ENCODE measurements at regions of chr12 and their contacts with region 1.

Region 1: GRCh38 chr12:7108796-7109571 is at the start of gene C1RL:
- DNase-seq: peak; percentile 86 to 94 (median 90)
- ATAC-seq: peak; percentile 85 to 88 (median 86)
- H3K4me3 ChIP-seq: peak within 1 kb of the TSS; percentile 31 to 76 (median 60)
- H3K27ac ChIP-seq: peak within 1 kb of the TSS; percentile 75 to 94 (median 91)
- H3K4me1 ChIP-seq: peaks cover 0 to 41% (median 10%) of the 10 kb centered on the region in 12 donors
- H3K27me3 ChIP-seq: no peaks in the 10 kb centered on the region
- CTCF ChIP-seq: peak; percentile 92 to 99 (median 97)
- POLR2A ChIP-seq: peak in 1 of 2 donors; percentile 8
- total RNA-seq, gene C1RL: 5.4 to 27.1 (median 7.9) TPM

Region 2: DNA sequence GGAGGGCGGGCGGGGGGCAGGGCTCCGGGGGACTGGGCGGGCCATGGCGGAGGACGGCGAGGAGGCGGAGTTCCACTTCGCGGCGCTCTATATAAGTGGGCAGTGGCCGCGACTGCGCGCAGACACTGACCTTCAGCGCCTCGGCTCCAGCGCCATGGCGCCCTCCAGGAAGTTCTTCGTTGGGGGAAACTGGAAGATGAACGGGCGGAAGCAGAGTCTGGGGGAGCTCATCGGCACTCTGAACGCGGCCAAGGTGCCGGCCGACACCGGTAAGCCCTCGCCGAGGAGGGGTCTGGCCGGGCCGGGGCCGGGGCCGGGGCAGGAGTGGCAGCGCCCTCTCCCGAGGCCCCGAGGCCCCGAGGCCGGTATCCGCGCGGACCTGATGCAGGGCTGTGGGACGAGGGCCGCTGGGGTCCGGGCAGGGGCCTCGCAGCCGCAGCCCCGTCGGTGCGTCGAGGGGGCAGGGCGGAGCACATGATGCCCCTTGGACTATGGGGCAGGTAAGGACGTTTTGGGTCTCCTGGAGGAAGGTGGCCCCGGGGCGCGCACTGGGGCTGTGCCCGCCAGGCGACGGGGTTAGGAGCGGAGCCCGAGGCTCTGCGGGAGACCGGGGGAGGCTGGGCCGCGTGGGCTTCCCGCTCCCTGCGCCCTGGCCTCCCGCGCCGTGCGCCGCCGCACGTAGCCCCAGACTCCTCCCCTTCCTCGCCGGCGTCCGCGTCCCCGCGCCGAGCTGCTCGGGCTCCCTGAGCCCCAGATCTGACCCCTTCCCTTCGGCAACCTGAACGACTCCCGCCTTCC is 241.4 kb before region 1 on chr12 and contains the start of gene TPI1:
- intact Hi-C with region 1: loop called in 1 of 10 experiments (anchors 5 kb)
- DNase-seq: peak; percentile 89 to 93 (median 90)
- ATAC-seq: peak; percentile 66 to 87 (median 82)
- H3K4me3 ChIP-seq: peak within 1 kb of the TSS; percentile 77 to 100 (median 98)
- H3K27ac ChIP-seq: peak within 1 kb of the TSS; percentile 96 to 100 (median 99)
- H3K4me1 ChIP-seq: peaks cover 15 to 47% (median 43%) of the 10 kb centered on the region in 12 donors
- H3K27me3 ChIP-seq: no peaks in the 10 kb centered on the region
- CTCF ChIP-seq: peak in 2 of 12 donors; percentile 15 to 23
- POLR2A ChIP-seq: peak; percentile 80 to 99
- total RNA-seq, gene TPI1: 600 to 1,024 (median 730) TPM

Region 3: DNA sequence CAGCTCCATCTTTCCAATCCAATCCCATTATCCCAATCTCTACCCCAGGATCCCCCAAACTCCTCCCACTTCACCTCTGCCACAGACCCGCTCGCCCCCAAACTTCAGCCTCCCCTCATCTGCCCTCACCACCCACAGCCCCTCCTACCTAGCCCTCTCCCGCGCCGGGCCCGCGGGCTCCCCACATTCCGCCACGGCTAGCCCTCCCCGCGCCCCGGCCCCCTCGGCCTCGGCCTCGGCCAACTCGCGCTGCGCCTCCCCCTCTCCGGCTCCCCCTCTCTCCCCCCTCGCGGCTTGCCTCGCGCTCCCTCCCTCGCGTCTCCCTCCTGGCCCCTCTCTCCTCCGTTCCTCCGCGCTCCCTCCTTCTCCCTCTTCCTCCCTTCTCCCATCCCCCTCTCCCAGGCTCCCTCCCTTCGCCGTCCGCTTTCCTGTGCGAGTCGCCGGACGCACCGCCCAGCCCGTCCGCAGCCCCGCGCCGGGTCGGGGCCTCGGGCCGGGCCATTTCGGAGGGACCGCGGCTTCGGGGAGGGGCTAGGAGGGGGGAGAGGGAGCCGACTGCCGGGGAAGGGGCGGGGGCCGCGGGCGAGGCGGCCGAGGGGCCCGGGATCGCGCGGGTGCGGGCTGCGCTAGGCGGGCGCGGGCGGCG is 181.5 kb before region 1 on chr12 and contains the start of gene ATN1:
- intact Hi-C with region 1: loop called in 1 of 10 experiments (anchors 5 kb)
- DNase-seq: peak; percentile 89 to 91 (median 90)
- ATAC-seq: peak; percentile 23 to 65 (median 60)
- H3K4me3 ChIP-seq: peak within 1 kb of the TSS; percentile 67 to 98 (median 83)
- H3K27ac ChIP-seq: peak within 1 kb of the TSS; percentile 87 to 98 (median 96)
- H3K4me1 ChIP-seq: peaks cover 12 to 79% (median 58%) of the 10 kb centered on the region in 12 donors
- H3K27me3 ChIP-seq: no peaks in the 10 kb centered on the region
- CTCF ChIP-seq: no peak
- POLR2A ChIP-seq: peak in 1 of 2 donors; percentile 38
- total RNA-seq, gene ATN1: 38.4 to 82.9 (median 67.2) TPM

Region 4: GRCh38 chr12:6944381-6945186 is 164.4 kb before region 1 on chr12:
- intact Hi-C with region 1: loop called in 5 of 10 experiments (anchors 1 to 10 kb)
- DNase-seq: peak; percentile 94 to 96 (median 95)
- ATAC-seq: peak; percentile 70 to 78 (median 72)
- H3K4me3 ChIP-seq: peak overlapping the region; percentile 52 to 86 (median 78)
- H3K27ac ChIP-seq: peak overlapping the region; percentile 91 to 100 (median 98)
- H3K4me1 ChIP-seq: peaks cover 0 to 64% (median 30%) of the 10 kb centered on the region in 12 donors
- H3K27me3 ChIP-seq: no peaks in the 10 kb centered on the region
- CTCF ChIP-seq: peak; percentile 68 to 96 (median 86)
- POLR2A ChIP-seq: peak in 1 of 2 donors; percentile 28

Region 5: GRCh38 chr12:7018350-7019042 is 90.5 kb before region 1 on chr12 and contains the start of gene LPCAT3:
- intact Hi-C with region 1: loop called in 2 of 10 experiments (anchors 5 kb)
- DNase-seq: peak; percentile 97 to 99 (median 98)
- ATAC-seq: peak; percentile 96 to 97 (median 96)
- H3K4me3 ChIP-seq: peak within 1 kb of the TSS; percentile 53 to 96 (median 78)
- H3K27ac ChIP-seq: peak within 1 kb of the TSS; percentile 48 to 96 (median 94)
- H3K4me1 ChIP-seq: peaks cover 0 to 38% (median 19%) of the 10 kb centered on the region in 12 donors
- H3K27me3 ChIP-seq: no peaks in the 10 kb centered on the region
- CTCF ChIP-seq: peak; percentile 84 to 96 (median 91)
- POLR2A ChIP-seq: peak in 1 of 2 donors; percentile 76
- total RNA-seq, gene LPCAT3: 19.9 to 66.3 (median 46.8) TPM

Region 6: DNA sequence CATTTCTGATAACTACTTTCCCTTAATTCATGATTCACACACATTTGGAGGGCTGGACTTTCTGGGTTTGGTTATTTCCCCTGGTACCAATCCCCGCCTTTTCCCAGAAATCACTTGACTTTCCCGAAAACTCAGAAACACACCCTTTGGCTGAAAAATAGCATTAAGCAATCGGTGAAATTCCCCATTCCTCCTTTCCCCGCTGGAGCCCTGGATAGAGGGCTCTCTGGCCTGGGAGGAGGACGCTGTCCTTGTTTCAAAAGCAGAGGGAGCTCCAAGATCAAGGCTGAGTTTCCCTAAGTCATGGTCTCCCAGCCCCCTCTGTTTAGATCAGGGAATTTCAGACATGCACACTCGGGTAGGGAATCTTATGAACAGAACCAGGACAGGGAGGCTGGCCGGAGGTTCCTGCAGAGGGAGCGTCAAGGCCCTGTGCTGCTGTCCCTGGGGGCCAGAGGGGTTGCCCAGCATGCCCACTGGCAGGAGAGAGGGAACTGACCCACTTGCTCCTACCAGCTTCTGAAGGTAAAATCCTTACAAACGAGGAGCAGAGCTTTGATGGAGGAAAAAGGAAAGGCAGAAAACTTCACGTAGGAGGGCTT is 48.5 kb before region 1 on chr12 and contains the start of gene C1S:
- intact Hi-C with region 1: loop called in 9 of 10 experiments (anchors 1 to 5 kb)
- DNase-seq: peak; percentile 69 to 74 (median 71)
- ATAC-seq: peak; percentile 92 to 98 (median 98)
- H3K4me3 ChIP-seq: peak within 1 kb of the TSS in 10 of 12 donors; percentile 37 to 59 (median 42)
- H3K27ac ChIP-seq: peak within 1 kb of the TSS; percentile 54 to 82 (median 72)
- H3K4me1 ChIP-seq: peaks cover 0 to 34% (median 6%) of the 10 kb centered on the region in 12 donors
- H3K27me3 ChIP-seq: peaks cover 0 to 6% (median 0%) of the 10 kb centered on the region in 9 donors
- CTCF ChIP-seq: peak; percentile 51 to 90 (median 78)
- POLR2A ChIP-seq: peak in 1 of 2 donors; percentile 39
- total RNA-seq, gene C1S: 31.9 to 247 (median 74.2) TPM

Region 7: GRCh38 chr12:7144414-7145120 is 35.6 kb after region 1 on chr12:
- intact Hi-C with region 1: no loop called
- DNase-seq: no peak
- ATAC-seq: peak in 3 of 4 donors; percentile 21 to 61 (median 33)
- H3K4me3 ChIP-seq: no peak overlapping the region
- H3K27ac ChIP-seq: peak overlapping the region in 1 of 12 donors; percentile 19
- H3K4me1 ChIP-seq: peaks cover 0 to 3% (median 0%) of the 10 kb centered on the region in 12 donors
- H3K27me3 ChIP-seq: no peaks in the 10 kb centered on the region
- CTCF ChIP-seq: peak; percentile 36 to 72 (median 56)
- POLR2A ChIP-seq: no peak

Region 8: DNA sequence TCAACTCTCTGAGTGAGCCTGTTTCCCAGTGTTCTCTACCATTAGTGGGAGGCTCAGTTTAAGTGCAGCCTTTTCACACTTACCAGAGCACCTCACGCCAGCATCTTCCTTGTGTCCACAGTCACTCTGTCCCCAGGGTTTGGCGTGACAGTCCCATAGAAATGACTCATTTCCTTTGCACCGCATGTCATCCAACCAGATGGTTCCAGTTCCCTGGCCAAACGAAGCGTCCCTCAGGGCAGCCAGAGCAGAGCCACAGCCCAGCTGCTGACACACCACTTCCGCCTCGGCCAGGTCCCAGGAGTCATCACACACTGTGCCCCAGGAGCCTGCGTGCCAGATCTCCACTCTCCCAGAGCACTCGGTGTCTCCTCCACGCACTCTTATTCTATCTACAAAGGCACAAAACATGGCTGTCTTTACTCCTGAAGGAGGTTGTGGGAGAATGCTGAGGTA is 260.3 kb after region 1 on chr12:
- intact Hi-C with region 1: no loop called
- DNase-seq: peak; percentile 39 to 77 (median 72)
- ATAC-seq: peak; percentile 51 to 83 (median 71)
- H3K4me3 ChIP-seq: peak overlapping the region in 3 of 12 donors; percentile 6 to 29 (median 21)
- H3K27ac ChIP-seq: peak overlapping the region in 1 of 12 donors; percentile 15
- H3K4me1 ChIP-seq: no peaks in the 10 kb centered on the region
- H3K27me3 ChIP-seq: peaks cover 0 to 2% (median 0%) of the 10 kb centered on the region in 9 donors
- CTCF ChIP-seq: no peak
- POLR2A ChIP-seq: no peak

Measured in heart left ventricle (tissue), 16 donors.